ENCODE measurements at regions of chr7 and their contacts with region 1.

Region 1: DNA sequence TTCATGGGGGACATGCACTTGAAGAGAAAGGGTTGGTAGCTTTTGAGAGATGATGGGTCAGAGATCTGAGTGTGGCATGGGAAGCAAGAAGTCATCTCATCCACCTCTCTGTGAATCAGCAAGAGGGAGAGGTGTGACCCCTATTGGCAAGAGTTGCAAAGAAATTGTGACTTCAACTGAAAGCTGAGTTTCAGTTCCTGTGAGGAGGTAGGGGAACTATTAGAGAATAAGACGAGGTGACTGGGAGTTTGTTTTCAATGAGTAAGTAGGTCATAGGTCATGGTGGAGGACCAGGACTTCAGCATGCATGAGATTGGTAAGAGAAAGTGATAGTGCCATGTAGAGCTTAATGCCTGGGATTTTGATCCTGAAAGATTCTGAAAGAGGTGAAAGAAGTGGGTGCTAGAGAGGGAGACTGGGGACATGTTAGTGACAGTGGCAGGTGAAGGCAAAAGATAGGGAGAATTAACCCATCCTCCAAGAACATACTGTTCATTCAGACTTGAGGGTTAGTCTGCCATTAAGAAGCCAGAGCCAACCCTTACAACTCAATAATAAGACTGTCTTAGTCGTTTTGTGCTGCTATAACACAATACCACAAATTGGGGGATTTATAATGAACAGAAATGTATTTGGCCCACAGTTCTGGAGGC is 75.5 kb upstream of the CAPZA2 start:
- DNase-seq: no peak
- H3K4me3 Mint-ChIP-seq: no peak overlapping the region
- H3K27ac Mint-ChIP-seq: no peak overlapping the region
- H3K4me1 Mint-ChIP-seq: no peaks in the 10 kb centered on the region
- H3K27me3 Mint-ChIP-seq: peaks cover 14% of the 10 kb centered on the region

Region 2: DNA sequence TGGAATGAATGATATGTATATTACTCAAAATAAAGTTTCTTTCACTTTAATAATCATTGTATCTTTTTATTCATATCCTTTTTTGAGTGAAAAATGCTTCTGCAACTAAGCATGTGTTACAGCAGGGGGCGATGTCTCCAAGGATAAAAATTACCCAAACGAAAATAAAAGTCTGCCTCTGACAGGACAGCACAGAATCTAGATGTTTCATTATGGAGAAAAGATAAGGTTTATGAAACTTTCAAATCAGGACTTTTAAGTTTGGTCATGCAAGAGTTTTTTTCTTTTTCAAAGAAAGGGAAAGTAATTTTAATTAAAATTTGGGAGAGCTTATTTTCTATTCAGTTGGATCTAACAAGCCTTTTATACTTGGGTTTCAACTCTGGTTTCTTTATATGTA is 528.2 kb before region 1 on chr7:
- CTCF ChIA-PET with region 1: interaction called, 12 read pairs
- POLR2A ChIA-PET with region 1: no interaction called
- DNase-seq: no peak
- H3K4me3 Mint-ChIP-seq: no peak overlapping the region
- H3K27ac Mint-ChIP-seq: no peak overlapping the region
- H3K4me1 Mint-ChIP-seq: peaks cover 11% of the 10 kb centered on the region
- H3K27me3 Mint-ChIP-seq: peaks cover 4% of the 10 kb centered on the region

Region 3: GRCh38 chr7:116501425-116502167 is 285.3 kb before region 1 on chr7:
- CTCF ChIA-PET with region 1: no interaction called
- POLR2A ChIA-PET with region 1: no interaction called
- DNase-seq: no peak
- H3K4me3 Mint-ChIP-seq: no peak overlapping the region
- H3K27ac Mint-ChIP-seq: no peak overlapping the region
- H3K4me1 Mint-ChIP-seq: peaks cover 10% of the 10 kb centered on the region
- H3K27me3 Mint-ChIP-seq: peaks cover 63% of the 10 kb centered on the region

Measured in activated CD4-positive, alpha-beta memory T cell treated with anti-CD3 and anti-CD28 coated beads, Interleukin-2, amount 10 ng/mL, durations not matched to agents 7 days and 5 days (primary cell).